Activated naive CD4-positive, alpha-beta T cell treated with anti-CD3 and anti-CD28 coated beads for 36 hours (primary cell): ENCODE measurements at regions of chr2 and their contacts with region 1.

Region 1: GRCh38 chr2:46241344-46241743 is 55.9 kb upstream of the EPAS1 start:
- DNase-seq: no peak
- H3K4me3 Mint-ChIP-seq: no peak overlapping the region
- H3K27ac Mint-ChIP-seq: no peak overlapping the region
- H3K4me1 Mint-ChIP-seq: peaks cover 33% of the 10 kb centered on the region
- H3K27me3 Mint-ChIP-seq: no peaks in the 10 kb centered on the region

Region 2: DNA sequence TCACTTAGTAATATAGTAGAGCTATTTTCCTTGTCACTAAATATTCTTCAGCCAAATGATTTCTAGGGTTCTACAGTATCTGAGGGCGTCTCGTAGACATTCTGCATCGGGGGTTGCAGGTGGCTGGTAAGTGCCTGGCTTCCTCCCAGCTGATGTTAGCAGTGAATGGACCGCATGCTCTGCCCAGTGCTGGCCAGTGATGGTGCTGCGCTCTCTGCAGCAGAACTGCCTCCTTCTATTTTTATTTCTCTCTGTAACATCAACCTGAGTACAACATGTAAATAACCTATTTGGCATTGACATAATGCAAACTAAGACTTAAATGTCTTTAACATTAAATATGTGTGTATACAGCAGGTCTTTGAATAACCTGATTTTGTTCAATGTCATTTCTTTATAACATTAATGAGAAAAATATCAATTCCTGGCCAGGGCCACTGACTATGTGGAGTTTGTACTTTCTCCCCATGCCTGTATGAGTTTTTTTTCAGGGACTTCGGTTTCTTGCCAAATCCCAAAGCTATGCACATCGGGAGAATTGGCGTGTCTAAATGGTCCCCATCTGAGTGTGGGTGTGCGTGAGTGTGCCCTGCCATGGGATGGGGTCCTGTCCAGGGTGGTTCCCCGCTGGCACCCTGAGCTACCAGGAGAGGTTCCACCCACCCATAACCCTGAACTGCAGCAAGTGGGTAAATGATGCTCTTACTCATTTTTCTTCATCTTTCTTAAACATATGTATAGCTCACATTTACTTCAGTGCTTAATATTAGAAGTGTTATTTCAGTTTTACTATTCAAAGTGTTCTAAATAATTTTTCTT is 222.4 kb before region 1 on chr2:
- CTCF ChIA-PET with region 1: no interaction called
- intact Hi-C with region 1: no loop called
- DNase-seq: no peak
- H3K4me3 Mint-ChIP-seq: no peak overlapping the region
- H3K27ac Mint-ChIP-seq: no peak overlapping the region
- H3K4me1 Mint-ChIP-seq: no peaks in the 10 kb centered on the region
- H3K27me3 Mint-ChIP-seq: no peaks in the 10 kb centered on the region

Region 3: DNA sequence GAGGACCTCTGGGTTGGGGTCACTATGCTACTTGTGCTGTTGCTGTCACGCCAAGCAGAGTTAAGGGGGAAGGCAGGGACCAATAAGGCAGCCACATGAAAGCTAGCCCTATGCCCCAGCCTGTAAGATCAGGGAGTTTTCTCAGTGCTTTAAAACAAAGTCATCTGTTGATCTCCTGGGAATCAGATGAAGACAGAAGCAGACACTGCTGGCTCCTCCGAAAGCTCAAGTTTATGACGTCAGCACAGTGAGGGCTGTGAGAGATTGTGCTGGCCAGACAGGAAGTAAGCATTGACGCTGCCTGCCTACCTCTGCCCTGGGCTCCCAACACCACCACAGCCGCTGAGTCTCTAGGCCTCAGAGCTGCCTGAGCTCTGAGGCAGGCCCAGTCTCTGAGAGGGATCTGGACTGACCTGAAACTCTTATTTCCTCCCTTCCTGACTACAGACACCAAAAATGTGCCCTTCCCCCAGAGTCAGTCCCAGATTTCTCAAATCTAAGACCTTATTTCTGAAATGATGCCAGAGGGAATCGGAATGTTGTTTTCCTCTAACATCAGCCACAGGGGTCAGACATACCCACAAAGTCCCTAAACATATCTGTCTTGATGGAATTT is 62.2 kb before region 1 on chr2:
- CTCF ChIA-PET with region 1: no interaction called
- intact Hi-C with region 1: loop called (anchors 2 kb)
- DNase-seq: peak; percentile 76
- H3K4me3 Mint-ChIP-seq: no peak overlapping the region
- H3K27ac Mint-ChIP-seq: no peak overlapping the region
- H3K4me1 Mint-ChIP-seq: peaks cover 13% of the 10 kb centered on the region
- H3K27me3 Mint-ChIP-seq: no peaks in the 10 kb centered on the region

Region 4: GRCh38 chr2:46229134-46230063 is 11.9 kb before region 1 on chr2:
- CTCF ChIA-PET with region 1: interaction called, 3 read pairs
- intact Hi-C with region 1: loop called (anchors 1 kb)
- DNase-seq: peak; percentile 29
- H3K4me3 Mint-ChIP-seq: no peak overlapping the region
- H3K27ac Mint-ChIP-seq: peak overlapping the region; percentile 57
- H3K4me1 Mint-ChIP-seq: peaks cover 29% of the 10 kb centered on the region
- H3K27me3 Mint-ChIP-seq: no peaks in the 10 kb centered on the region

Region 5: GRCh38 chr2:46296840-46297545 is 55.6 kb after region 1 on chr2 and contains the start of gene EPAS1:
- CTCF ChIA-PET with region 1: interaction called, 3 read pairs
- intact Hi-C with region 1: loop called (anchors 1 kb)
- DNase-seq: peak; percentile 84
- H3K4me3 Mint-ChIP-seq: peak within 1 kb of the TSS; percentile 80
- H3K27ac Mint-ChIP-seq: no peak within 1 kb of the TSS
- H3K4me1 Mint-ChIP-seq: peaks cover 15% of the 10 kb centered on the region
- H3K27me3 Mint-ChIP-seq: peaks cover 47% of the 10 kb centered on the region
- total RNA-seq, gene EPAS1: 2.1 to 2.9 TPM